ENCODE measurements at regions of chr11 and their contacts with region 1.

Region 1: DNA sequence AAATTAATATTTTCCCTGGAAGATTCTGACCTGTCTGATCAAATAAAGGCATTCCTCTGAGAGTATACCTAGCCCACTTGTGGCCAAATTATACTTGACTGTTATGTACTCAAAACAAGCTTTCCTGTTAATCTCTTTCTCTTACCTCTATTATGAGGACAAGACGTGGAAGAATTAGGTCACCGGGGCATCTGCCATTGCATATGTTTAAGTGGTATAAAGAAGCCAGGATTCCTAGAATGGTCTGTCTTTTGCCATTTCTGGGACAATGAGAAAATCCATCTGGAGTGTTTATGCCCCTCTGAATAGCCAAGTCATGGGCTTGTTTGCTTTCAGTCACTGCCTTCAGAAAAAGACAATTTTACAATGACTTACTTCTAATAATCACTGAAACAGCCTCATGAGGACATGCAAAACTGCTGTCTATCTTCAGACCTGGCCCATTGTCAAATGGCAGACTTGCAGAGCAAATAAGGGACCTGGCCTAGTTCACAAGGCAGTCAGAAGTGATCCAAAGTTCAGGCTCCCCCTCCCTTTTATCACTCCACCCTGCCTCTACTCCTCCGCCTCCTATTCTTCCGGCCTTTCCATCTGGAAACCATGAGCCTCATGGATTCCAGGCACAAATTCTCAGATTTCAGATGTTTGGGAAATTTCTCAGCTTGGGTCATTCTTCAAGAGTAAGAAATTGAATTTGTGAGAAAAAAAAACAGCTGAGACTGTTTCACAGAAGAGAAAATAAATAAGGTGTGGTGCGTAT is 128.1 kb upstream of the LDLRAD3 start:
- DNase-seq: no peak
- H3K4me3 ChIP-seq: no peak overlapping the region
- CTCF ChIP-seq: no peak

Region 2: GRCh38 chr11:35478471-35479091 is 337.2 kb before region 1 on chr11:
- in situ Hi-C with region 1: loop called (anchors 5 kb)
- DNase-seq: no peak
- H3K4me3 ChIP-seq: no peak overlapping the region
- CTCF ChIP-seq: no peak

Region 3: DNA sequence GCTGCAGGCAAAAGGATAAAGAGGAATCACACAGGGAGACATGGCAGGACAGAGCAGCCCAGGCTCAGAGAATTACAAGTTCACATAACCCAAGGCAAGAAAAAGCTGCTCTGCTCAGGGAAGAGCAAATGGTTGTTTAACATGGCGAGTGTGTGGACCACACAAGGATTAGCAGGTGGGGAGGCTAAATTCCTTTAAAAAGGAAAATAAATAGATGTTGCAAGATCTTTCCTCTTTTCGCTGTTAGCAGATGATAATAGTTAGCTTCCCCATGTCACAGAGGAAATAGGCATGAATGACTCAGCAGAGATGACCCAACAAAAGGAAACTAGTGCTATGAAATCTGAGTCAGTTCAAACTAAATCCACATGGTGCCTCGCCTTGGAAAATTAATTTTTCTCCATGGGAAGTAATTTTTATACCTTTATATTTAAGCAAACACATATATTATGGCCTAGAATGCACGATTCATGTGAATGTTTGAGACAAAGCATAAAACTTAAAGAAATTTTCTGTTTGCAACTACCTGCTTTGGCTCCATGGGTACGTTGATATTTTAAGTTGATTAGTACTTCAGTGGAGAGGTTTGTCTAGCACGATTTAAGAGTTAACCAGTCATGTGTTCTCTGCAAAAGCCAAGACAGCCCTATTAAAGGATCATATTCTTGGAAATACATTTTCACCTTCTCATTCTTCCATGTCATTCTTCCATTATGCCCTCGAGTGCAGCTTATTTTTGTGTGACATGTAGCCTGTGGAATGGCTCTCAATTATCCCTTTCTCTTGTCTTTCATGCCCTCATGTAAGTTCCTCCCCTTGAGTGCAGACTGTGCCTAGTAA is 236.0 kb before region 1 on chr11:
- in situ Hi-C with region 1: no loop called
- DNase-seq: peak; percentile 70
- H3K4me3 ChIP-seq: no peak overlapping the region
- CTCF ChIP-seq: no peak

Region 4: GRCh38 chr11:35765211-35765610 is 50.5 kb before region 1 on chr11:
- in situ Hi-C with region 1: loop called (anchors 5 kb)
- DNase-seq: no peak
- H3K4me3 ChIP-seq: no peak overlapping the region
- CTCF ChIP-seq: no peak

Region 5: DNA sequence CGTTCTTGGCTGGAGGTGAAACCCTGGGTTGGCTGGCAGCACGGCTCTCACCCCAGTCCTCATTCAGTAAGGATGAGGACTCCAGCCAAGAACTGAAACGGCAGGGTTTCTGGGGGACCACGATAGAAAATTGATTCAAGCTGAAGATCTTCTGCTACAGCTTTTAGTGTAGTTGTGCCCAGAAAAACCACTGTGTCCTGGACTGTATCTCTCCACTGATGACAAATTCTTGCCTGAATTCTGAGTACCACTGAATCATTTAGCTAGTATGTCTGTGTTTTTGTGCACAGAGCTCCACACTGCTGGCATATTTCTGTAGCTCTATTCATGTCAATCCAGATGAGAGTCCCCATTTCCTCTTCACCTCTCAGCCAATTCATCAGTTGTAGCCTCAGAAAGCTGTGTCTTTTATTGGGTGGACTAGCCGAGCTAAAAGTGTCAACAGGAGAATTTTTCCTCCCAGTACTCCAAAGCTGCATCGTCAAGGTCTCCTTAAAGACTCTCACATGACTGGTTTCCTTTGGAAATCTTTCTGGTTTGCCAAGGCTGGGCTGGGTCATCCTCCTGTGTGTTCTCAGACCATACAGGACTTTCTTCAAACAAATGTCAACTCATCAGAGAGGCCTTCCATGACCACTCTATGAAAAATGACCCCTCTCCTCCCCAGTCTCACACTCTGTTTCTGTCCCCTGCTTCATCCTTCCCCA is 272.7 kb after region 1 on chr11:
- in situ Hi-C with region 1: no loop called
- DNase-seq: peak; percentile 15
- H3K4me3 ChIP-seq: no peak overlapping the region
- CTCF ChIP-seq: no peak

Region 6: GRCh38 chr11:36258730-36259360 is 443.1 kb after region 1 on chr11:
- in situ Hi-C with region 1: loop called (anchors 5 kb)
- DNase-seq: peak; percentile 52
- H3K4me3 ChIP-seq: no peak overlapping the region
- CTCF ChIP-seq: peak; percentile 79